ENCODE measurements at regions of chr1 and their contacts with region 1.

Region 1: GRCh38 chr1:46410156-46411009 is 16.3 kb downstream of the FAAH start:
- DNase-seq: no peak
- H3K4me3 Mint-ChIP-seq: no peak overlapping the region
- H3K27ac Mint-ChIP-seq: no peak overlapping the region
- H3K4me1 Mint-ChIP-seq: no peaks in the 10 kb centered on the region
- H3K27me3 Mint-ChIP-seq: no peaks in the 10 kb centered on the region
- CTCF ChIP-seq: no peak

Region 2: DNA sequence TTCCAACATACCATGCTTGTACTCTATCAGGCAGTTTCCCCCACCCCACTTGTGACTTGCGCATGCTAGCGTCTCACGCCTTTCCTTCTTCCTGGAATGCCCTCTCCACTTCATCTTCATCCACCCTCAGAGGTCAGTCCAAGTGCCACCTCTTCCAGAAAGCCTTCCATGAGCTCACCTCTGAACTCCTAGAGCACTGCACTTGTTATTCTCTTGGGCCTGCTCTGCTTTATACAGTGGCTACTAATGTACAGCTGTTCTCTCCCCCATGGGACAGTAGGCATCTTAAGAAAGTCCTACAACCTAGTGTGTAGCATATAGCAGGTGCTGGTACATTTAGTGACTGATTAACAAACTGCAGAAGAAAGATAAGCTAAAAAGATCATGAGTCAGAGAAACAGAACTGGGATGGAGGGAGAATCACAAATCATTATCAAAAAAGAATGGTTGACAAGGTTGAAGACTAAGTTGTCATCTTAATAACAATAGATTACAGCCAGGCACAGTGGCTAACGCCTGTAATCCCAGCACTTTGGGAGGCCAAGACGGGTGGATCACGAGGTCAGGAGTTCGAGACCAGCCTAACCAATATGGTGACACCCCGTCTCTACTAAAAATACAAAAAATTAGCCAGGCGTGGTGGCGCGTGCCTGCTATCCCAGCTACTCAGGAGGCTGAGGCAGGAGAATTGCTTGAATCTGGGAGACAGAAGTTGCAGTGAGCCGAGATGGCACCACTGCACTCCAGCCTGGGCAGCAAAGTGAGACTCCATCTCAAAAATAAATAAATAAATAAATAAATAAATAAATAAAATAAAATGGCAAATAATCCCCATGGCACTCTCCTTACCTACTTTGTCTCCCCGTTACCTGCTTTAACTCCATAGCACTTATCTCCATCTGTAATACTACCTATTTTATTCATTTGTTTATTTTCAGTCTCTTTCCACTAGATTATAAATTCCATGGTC is 251.8 kb before region 1 on chr1:
- CTCF ChIA-PET with region 1: no interaction called
- intact Hi-C with region 1: no loop called
- DNase-seq: no peak
- H3K4me3 Mint-ChIP-seq: no peak overlapping the region
- H3K27ac Mint-ChIP-seq: no peak overlapping the region
- H3K4me1 Mint-ChIP-seq: no peaks in the 10 kb centered on the region
- H3K27me3 Mint-ChIP-seq: no peaks in the 10 kb centered on the region
- CTCF ChIP-seq: no peak

Region 3: DNA sequence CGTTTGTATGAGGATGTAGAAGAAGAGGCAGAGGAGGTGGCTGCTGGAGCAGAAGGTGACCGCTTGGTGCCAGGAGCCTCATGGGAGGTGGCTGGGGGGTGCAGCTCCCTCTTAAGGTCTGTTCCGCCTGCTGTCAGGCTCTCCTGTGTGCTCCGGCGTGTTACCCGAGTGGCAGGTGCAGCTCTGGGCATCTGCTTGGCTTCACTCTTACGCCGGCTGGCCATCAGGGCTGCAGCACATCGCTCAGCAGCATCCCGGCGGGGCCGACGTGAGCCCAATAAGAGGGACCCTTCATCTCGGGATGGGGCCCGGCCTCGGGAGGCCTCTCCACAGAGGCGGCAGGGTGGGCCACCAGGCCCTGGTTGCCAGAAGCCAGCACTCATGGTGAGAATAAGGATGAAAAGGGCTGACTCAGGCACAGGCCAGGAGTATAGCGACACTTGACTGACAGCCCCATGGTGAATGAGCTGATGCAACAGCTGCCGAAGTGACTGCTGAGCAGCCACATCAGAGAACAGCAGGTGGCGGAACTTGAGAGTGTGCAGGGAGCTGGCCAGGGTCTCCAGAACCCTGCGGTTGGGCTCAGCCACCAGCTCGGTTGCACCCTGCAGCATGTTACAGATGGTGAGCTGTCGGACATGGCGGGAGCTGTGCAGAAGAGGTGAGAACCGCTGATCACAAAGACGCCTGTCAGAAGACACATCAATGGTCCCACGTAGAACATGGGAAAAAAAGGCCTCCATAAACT is 124.5 kb before region 1 on chr1:
- CTCF ChIA-PET with region 1: interaction called, 10 read pairs
- intact Hi-C with region 1: no loop called
- DNase-seq: no peak
- H3K4me3 Mint-ChIP-seq: no peak overlapping the region
- H3K27ac Mint-ChIP-seq: no peak overlapping the region
- H3K4me1 Mint-ChIP-seq: no peaks in the 10 kb centered on the region
- H3K27me3 Mint-ChIP-seq: no peaks in the 10 kb centered on the region
- CTCF ChIP-seq: no peak

Region 4: GRCh38 chr1:46340404-46341221 is 69.8 kb before region 1 on chr1 and contains the start of gene NSUN4:
- CTCF ChIA-PET with region 1: no interaction called
- intact Hi-C with region 1: no loop called
- DNase-seq: peak; percentile 90
- H3K4me3 Mint-ChIP-seq: peak within 1 kb of the TSS; percentile 85
- H3K27ac Mint-ChIP-seq: peak within 1 kb of the TSS; percentile 94
- H3K4me1 Mint-ChIP-seq: peaks cover 39% of the 10 kb centered on the region
- H3K27me3 Mint-ChIP-seq: no peaks in the 10 kb centered on the region
- CTCF ChIP-seq: peak; percentile 74
- total RNA-seq, gene NSUN4: 38.7 and 42.5 TPM in 2 replicates

Measured in Calu3 (cell line).